Heart left ventricle (tissue), 16 donors: ENCODE measurements at regions of chr2 and their contacts with region 1.

Region 1: GRCh38 chr2:32772638-32773447 is 145.0 kb downstream of the TTC27 start:
- DNase-seq: peak in 1 of 5 donors; percentile 12
- ATAC-seq: peak; percentile 47 to 79 (median 67)
- H3K4me3 ChIP-seq: no peak overlapping the region
- H3K27ac ChIP-seq: peak overlapping the region in 6 of 12 donors; percentile 3 to 44 (median 22)
- H3K4me1 ChIP-seq: peaks cover 0 to 30% (median 8%) of the 10 kb centered on the region in 12 donors
- H3K27me3 ChIP-seq: no peaks in the 10 kb centered on the region
- CTCF ChIP-seq: peak; percentile 41 to 89 (median 80)
- POLR2A ChIP-seq: no peak

Region 2: DNA sequence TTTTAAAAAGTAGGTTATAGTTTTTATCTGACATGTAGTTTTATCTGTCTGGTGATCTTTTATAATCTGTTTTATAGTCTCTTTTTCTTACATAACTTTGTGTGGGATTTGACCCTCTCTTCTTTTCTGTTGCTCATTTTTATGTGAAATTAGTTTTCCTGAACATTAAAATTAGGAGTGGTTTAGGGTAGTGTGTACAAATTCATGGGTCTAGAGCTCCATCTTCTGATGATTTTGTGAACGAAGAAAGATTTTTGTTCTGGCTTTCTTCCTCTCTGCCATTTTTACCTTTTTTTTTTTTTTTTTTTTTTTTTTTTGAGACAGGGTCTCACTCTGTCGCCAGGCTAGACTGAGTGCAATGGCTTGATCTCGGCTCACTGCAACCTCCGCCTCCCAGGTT is 560.5 kb before region 1 on chr2:
- intact Hi-C with region 1: no loop called
- DNase-seq: no peak
- ATAC-seq: no peak
- H3K4me3 ChIP-seq: no peak overlapping the region
- H3K27ac ChIP-seq: no peak overlapping the region
- H3K4me1 ChIP-seq: no peaks in the 10 kb centered on the region
- H3K27me3 ChIP-seq: no peaks in the 10 kb centered on the region
- CTCF ChIP-seq: no peak
- POLR2A ChIP-seq: no peak

Region 3: DNA sequence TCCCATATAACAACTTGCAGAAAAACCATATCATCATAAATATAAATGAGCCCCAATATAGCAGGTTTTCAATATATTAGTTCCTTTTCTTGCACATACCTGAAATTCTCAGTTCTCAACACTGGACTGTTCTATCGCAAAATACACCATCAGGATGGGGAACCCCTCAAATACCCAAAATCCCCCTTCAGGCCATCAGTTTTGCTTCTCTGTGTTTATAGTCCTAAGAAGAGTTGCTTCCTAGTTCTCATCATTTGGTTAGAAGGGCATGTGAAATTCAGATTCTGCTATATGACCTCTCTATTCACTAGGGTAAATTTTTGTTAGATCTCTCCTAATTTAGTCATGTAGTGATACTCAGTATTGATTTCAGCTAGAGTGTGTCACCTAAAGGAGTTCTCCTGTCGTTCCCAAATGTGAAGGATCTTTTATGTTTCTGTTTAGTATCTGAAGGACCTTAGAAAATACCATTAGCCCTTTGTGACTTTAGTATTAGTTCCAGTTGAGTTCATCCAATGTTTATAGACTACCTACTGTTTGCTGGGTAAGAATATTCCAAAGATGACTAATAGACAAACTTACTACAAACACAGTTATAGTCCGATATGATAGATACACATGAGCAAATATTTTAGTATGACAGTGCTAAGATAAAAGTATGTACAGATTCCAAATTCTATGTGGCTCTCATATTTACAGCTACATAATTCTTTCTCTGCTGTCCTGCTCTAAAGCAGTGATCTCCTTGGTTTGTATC is 29.2 kb before region 1 on chr2:
- intact Hi-C with region 1: no loop called
- DNase-seq: no peak
- ATAC-seq: no peak
- H3K4me3 ChIP-seq: no peak overlapping the region
- H3K27ac ChIP-seq: no peak overlapping the region
- H3K4me1 ChIP-seq: peaks cover 0 to 41% (median 15%) of the 10 kb centered on the region in 12 donors
- H3K27me3 ChIP-seq: no peaks in the 10 kb centered on the region
- CTCF ChIP-seq: no peak
- POLR2A ChIP-seq: no peak

Region 4: GRCh38 chr2:32946314-32947075 is 173.7 kb after region 1 on chr2 and contains the start of gene LTBP1:
- intact Hi-C with region 1: loop called (anchors 1 to 5 kb)
- DNase-seq: peak; percentile 85 to 92 (median 87)
- ATAC-seq: peak; percentile 84 to 93 (median 87)
- H3K4me3 ChIP-seq: peak within 1 kb of the TSS; percentile 56 to 94 (median 79)
- H3K27ac ChIP-seq: peak within 1 kb of the TSS; percentile 76 to 95 (median 91)
- H3K4me1 ChIP-seq: peaks cover 0 to 33% (median 7%) of the 10 kb centered on the region in 12 donors
- H3K27me3 ChIP-seq: peaks cover 0 to 24% (median 0%) of the 10 kb centered on the region in 9 donors
- CTCF ChIP-seq: peak; percentile 62 to 93 (median 78)
- POLR2A ChIP-seq: peak in 1 of 2 donors; percentile 80
- total RNA-seq, gene LTBP1: 63.4 to 150 (median 103) TPM

Region 5: DNA sequence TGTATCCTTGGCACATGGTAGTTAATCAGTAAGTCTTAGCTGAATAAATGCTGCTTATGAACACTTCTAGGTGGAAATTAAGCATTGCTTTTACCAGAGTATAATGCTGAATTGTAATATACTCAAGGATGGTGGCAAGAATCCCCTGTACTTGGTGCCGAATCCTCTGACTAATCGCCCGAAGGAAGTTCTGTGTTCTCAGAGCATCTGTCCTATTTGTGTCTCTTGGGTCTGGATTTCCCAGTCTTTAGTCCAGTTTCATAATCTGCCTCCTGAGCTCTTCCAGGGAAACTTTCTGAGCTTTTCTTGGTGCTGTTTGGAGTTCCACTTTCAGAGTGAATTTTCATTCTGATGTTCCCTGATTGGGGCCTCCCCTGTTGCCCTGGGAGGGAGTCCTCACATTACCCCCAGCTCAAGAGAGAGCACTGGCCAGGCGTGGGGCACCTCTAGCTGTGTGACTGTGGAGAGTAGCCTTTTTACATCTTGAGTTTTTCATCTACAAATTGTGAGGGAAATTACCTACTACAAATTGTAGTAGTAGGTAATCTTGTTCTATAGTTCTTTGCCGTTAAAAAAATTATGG is 318.8 kb after region 1 on chr2:
- intact Hi-C with region 1: loop called in 5 of 10 experiments (anchors 2 to 5 kb)
- DNase-seq: no peak
- ATAC-seq: peak; percentile 36 to 81 (median 64)
- H3K4me3 ChIP-seq: no peak overlapping the region
- H3K27ac ChIP-seq: peak overlapping the region in 9 of 12 donors; percentile 6 to 61 (median 30)
- H3K4me1 ChIP-seq: peaks cover 0 to 36% (median 15%) of the 10 kb centered on the region in 12 donors
- H3K27me3 ChIP-seq: no peaks in the 10 kb centered on the region
- CTCF ChIP-seq: no peak
- POLR2A ChIP-seq: no peak

Region 6: GRCh38 chr2:33288011-33288410 is 515.2 kb after region 1 on chr2:
- intact Hi-C with region 1: loop called in 1 of 10 experiments (anchors 10 kb)
- DNase-seq: no peak
- ATAC-seq: no peak
- H3K4me3 ChIP-seq: no peak overlapping the region
- H3K27ac ChIP-seq: no peak overlapping the region
- H3K4me1 ChIP-seq: peaks cover 0 to 31% (median 17%) of the 10 kb centered on the region in 12 donors
- H3K27me3 ChIP-seq: no peaks in the 10 kb centered on the region
- CTCF ChIP-seq: no peak
- POLR2A ChIP-seq: no peak

Region 7: DNA sequence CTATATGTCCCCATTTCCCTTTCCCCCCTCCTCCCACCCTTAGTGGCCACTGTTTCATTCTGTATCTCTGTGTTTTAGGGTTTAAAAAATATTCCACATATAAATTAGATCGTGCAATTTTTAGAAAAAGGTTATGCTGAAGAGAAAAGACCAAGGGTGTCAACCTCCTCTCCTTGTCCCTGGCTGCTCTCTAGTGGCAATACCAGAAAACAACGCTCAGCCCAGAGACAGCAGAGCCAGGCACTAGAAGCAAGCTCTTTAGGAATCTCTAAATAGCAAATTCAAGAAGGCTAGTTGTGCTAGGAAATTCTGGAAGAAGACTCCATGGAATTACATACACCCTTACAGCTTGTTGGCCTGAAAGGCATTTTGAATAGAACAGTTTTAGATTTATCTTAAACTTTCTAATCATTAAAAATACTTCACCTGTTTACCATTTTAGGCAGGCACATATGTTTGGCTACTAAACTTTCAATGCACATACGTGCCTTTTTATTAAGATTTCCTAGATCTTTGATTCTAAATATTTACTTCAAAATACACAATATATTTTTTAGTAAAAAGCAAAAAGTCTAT is 668.5 kb after region 1 on chr2:
- intact Hi-C with region 1: loop called in 4 of 10 experiments (anchors 5 to 10 kb)
- DNase-seq: peak in 4 of 5 donors; percentile 56 to 64 (median 61)
- ATAC-seq: peak; percentile 66 to 85 (median 82)
- H3K4me3 ChIP-seq: no peak overlapping the region
- H3K27ac ChIP-seq: peak overlapping the region in 7 of 12 donors; percentile 10 to 74 (median 52)
- H3K4me1 ChIP-seq: peaks cover 0 to 45% (median 18%) of the 10 kb centered on the region in 12 donors
- H3K27me3 ChIP-seq: no peaks in the 10 kb centered on the region
- CTCF ChIP-seq: peak; percentile 51 to 83 (median 71)
- POLR2A ChIP-seq: no peak